WTC11 (cell line): ENCODE measurements at regions of chr19 and their contacts with region 1.

Region 1: DNA sequence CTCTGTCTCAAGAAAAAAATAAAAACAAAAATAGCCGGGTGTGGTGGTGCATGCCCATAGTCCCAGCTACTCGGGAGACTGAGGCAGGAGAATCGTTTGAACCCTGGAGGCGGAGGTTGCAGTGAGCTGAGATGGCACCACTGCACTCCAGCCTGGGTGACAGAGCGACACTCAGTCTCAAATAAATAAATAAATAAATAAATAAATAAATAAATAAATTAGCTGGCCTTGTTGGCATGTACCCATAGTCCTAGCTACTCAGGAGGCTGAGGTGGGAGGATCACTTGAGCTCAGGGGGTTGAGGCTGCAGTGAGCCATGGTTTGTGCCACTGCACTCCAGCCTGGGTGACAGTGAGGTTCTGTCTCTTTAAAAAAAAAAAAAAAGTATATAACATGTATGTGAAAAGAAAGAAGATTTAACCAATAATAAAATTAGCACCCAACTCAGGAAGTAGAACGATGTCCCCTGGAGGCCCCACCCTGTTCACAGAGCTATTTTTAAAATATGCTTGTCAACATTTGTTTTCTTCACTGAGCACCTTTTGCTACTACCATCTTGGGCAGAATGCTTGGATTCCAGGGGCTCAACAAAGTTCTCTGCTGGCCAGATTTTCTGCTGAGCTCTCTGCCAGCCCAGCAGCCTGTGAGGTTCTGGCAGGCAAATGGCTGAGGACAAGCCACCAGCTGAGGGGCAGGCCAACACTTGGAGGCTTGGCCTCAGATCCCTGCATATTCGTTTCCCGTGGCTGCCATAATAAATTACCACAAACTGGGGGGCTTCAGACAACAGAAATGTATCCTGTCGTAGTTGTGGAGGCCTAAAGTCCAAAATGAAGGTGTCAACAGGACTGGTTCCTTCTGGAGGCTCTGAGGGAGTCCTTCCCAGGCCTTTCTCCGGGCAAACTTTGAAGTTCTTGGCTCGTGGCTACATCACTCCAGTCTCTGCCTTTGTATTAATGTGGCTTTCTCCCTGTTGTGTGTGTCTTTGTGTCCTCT is 5.2 kb downstream of the SLC25A42 start:
- DNase-seq: no peak
- ATAC-seq: no peak
- H3K4me3 Mint-ChIP-seq: no peak overlapping the region
- H3K27ac Mint-ChIP-seq: no peak overlapping the region
- H3K4me1 Mint-ChIP-seq: peaks cover 11% of the 10 kb centered on the region
- H3K27me3 Mint-ChIP-seq: peaks cover 98% of the 10 kb centered on the region
- CTCF ChIP-seq: no peak

Region 2: GRCh38 chr19:19110410-19111135 is 41.6 kb after region 1 on chr19:
- CTCF ChIA-PET with region 1: interaction called, 15 read pairs
- POLR2A ChIA-PET with region 1: no interaction called
- DNase-seq: peak; percentile 81
- ATAC-seq: peak; percentile 62
- H3K4me3 Mint-ChIP-seq: peak overlapping the region; percentile 48
- H3K27ac Mint-ChIP-seq: no peak overlapping the region
- H3K4me1 Mint-ChIP-seq: peaks cover 29% of the 10 kb centered on the region
- H3K27me3 Mint-ChIP-seq: peaks cover 40% of the 10 kb centered on the region
- CTCF ChIP-seq: peak; percentile 22; the same call in 1 of the 2 replicates